ENCODE measurements at regions of chr16 and their contacts with region 1.

Region 1: DNA sequence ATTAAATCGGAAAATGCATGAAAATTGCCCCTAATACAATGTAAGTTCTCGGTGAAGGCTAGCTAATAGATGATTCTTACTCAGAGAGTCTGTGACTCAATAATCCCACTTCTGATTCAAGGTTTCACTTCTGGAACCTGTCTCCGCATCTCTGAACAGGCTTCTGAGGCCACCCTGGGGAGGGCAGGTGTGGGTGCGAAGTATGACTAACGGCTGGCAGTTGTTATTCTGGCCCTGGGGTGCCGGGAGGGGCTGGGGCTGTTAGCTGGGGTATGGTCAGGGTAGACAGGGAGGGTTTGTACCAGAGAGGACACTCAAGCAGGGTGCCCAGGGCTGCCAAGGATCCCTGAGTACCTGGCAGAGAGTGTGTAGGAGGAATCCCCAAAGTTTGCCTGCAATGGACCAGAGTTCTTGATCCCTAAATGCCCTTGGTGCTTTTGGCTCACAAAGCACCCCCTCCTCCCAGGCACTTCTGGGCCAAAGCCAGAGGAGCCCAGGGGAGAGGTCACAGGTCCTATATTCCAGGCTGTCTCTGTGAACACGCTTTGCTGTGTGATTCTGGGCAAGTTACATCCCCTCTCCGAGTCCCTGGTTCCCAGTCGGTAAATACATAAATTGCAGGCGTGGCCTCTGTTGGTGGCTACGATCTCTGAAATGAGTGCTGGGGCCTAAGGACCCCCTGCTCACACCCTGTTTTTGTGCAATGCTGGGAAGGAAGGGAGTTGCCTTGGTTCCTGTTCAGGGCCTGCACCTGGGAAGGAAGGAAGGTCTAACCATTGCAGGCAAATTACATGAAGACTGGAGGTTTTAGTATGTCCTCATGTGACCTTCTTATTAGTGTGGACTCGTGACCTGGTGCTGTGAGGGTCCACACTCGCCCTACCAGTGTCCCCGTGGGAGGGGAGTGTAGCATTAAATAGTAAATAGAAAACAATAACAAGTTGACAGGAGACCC is 49.9 kb upstream of the CPNE2 start:
- DNase-seq: peak; percentile 88
- H3K4me3 Mint-ChIP-seq: peak overlapping the region; percentile 80
- H3K27ac Mint-ChIP-seq: peak overlapping the region; percentile 97
- H3K4me1 Mint-ChIP-seq: peaks cover 62% of the 10 kb centered on the region
- H3K27me3 Mint-ChIP-seq: no peaks in the 10 kb centered on the region

Region 2: GRCh38 chr16:56874800-56875199 is 167.6 kb before region 1 on chr16:
- intact Hi-C with region 1: no loop called
- DNase-seq: no peak
- H3K4me3 Mint-ChIP-seq: no peak overlapping the region
- H3K27ac Mint-ChIP-seq: no peak overlapping the region
- H3K4me1 Mint-ChIP-seq: peaks cover 1% of the 10 kb centered on the region
- H3K27me3 Mint-ChIP-seq: no peaks in the 10 kb centered on the region

Region 3: GRCh38 chr16:56944954-56945839 is 97.2 kb before region 1 on chr16:
- intact Hi-C with region 1: loop called (anchors 2 kb)
- DNase-seq: no peak
- H3K4me3 Mint-ChIP-seq: peak overlapping the region; percentile 23
- H3K27ac Mint-ChIP-seq: peak overlapping the region; percentile 92
- H3K4me1 Mint-ChIP-seq: peaks cover 39% of the 10 kb centered on the region
- H3K27me3 Mint-ChIP-seq: no peaks in the 10 kb centered on the region

Region 4: GRCh38 chr16:56964243-56965148 is 77.9 kb before region 1 on chr16:
- intact Hi-C with region 1: loop called (anchors 1 kb)
- DNase-seq: peak; percentile 99
- H3K4me3 Mint-ChIP-seq: no peak overlapping the region
- H3K27ac Mint-ChIP-seq: peak overlapping the region; percentile 14
- H3K4me1 Mint-ChIP-seq: peaks cover 19% of the 10 kb centered on the region
- H3K27me3 Mint-ChIP-seq: peaks cover 1% of the 10 kb centered on the region

Region 5: GRCh38 chr16:57000271-57001025 is 42.0 kb before region 1 on chr16:
- intact Hi-C with region 1: loop called (anchors 1 kb)
- DNase-seq: peak; percentile 74
- H3K4me3 Mint-ChIP-seq: peak overlapping the region; percentile 75
- H3K27ac Mint-ChIP-seq: peak overlapping the region; percentile 97
- H3K4me1 Mint-ChIP-seq: peaks cover 74% of the 10 kb centered on the region
- H3K27me3 Mint-ChIP-seq: no peaks in the 10 kb centered on the region

Region 6: DNA sequence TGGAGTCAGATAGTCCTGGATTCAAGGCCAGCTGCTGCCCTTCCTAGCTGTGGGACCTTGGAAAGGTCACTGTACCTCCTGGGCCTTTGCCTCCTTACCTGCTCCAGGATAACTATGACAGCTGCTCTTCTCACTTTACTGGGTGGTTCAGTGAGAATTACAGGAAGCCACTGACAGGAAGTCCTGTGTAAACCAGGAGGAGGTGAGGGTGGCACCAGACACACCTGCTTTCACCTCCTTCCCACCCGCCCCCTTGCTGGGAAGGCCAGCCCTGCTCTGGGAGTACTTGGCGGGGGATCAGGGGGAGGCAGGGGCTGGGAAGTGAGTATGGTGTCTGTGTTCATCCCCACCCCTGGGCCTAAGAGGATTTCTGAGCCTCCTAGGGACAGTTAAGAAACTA is 92.5 kb after region 1 on chr16:
- intact Hi-C with region 1: no loop called
- DNase-seq: peak; percentile 78
- H3K4me3 Mint-ChIP-seq: peak overlapping the region; percentile 75
- H3K27ac Mint-ChIP-seq: peak overlapping the region; percentile 87
- H3K4me1 Mint-ChIP-seq: peaks cover 42% of the 10 kb centered on the region
- H3K27me3 Mint-ChIP-seq: no peaks in the 10 kb centered on the region